ENCODE measurements at regions of chr3 and their contacts with region 1.

Region 1: GRCh38 chr3:137970914-137971831 is 38.8 kb upstream of the CLDN18 start:
- DNase-seq: peak; percentile 57 to 85 (median 80)
- H3K4me3 ChIP-seq: no peak overlapping the region
- H3K27ac ChIP-seq: no peak overlapping the region
- H3K27me3 ChIP-seq: peaks cover 0 to 16% (median 0%) of the 10 kb centered on the region in 45 donors
- CTCF ChIP-seq: peak; percentile 52 to 86 (median 77)

Region 2: DNA sequence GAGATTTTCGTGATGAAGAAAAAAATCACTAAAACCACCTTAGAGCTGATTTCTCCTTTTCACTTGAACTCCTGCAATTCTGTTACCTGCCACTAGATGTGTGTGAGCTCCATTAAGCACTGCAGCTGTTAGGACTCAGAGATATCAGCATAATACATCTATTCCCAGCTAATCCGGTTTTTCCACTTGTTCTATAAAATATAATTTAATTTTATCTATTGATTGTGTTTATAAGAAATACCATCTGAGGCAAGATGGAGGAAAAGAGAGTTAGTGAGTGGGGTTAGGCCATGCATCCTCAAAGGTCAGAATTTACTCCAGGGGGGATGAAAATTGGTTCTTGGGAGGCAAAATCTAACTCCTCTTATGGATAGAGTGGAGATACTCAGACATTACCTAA is 860.7 kb before region 1 on chr3:
- intact Hi-C with region 1: loop called in 1 of 2 experiments (anchors 10 kb)
- DNase-seq: no peak
- H3K4me3 ChIP-seq: no peak overlapping the region
- H3K27ac ChIP-seq: no peak overlapping the region
- H3K27me3 ChIP-seq: peaks cover 0 to 42% (median 19%) of the 10 kb centered on the region in 45 donors
- CTCF ChIP-seq: peak; percentile 27 to 82 (median 64)

Region 3: GRCh38 chr3:138442433-138442832 is 471.3 kb after region 1 on chr3:
- intact Hi-C with region 1: no loop called
- DNase-seq: no peak
- H3K4me3 ChIP-seq: no peak overlapping the region
- H3K27ac ChIP-seq: no peak overlapping the region
- H3K27me3 ChIP-seq: no peaks in the 10 kb centered on the region
- CTCF ChIP-seq: no peak